Activated CD4-positive, alpha-beta T cell treated with anti-CD3 and anti-CD28 coated beads, Interleukin-2, amount 10 ng/mL, durations not matched to agents 24 days and 14 days (primary cell): ENCODE measurements at regions of chr6 and their contacts with region 1.

Region 1: GRCh38 chr6:15735567-15736265 is 72.9 kb upstream of the DTNBP1 start:
- DNase-seq: peak; percentile 53
- H3K4me3 Mint-ChIP-seq: peak overlapping the region; percentile 68
- H3K27ac Mint-ChIP-seq: peak overlapping the region; percentile 81
- H3K4me1 Mint-ChIP-seq: peaks cover 35% of the 10 kb centered on the region
- H3K27me3 Mint-ChIP-seq: no peaks in the 10 kb centered on the region

Region 2: DNA sequence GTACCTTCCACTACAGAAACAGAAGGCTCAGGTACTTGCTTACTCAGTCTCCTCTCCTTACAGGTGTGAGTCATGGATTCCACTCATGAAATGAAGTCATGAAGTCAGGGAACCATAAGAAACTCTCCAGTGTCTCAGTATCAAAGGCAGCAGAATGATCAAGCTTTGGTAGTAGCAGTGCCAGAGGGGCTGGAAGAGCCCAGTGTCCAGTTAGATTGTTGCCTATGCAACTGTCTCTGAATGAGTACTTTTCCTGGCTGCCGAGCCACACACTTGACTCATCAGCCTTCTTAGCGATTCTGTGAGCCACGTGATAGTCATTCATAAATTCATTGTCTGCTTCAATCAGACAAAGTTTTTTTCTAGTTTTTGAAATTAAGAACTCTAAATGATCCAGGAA is 20.7 kb before region 1 on chr6:
- intact Hi-C with region 1: loop called (anchors 2 kb)
- DNase-seq: no peak
- H3K4me3 Mint-ChIP-seq: no peak overlapping the region
- H3K27ac Mint-ChIP-seq: peak overlapping the region; percentile 75
- H3K4me1 Mint-ChIP-seq: peaks cover 9% of the 10 kb centered on the region
- H3K27me3 Mint-ChIP-seq: no peaks in the 10 kb centered on the region

Region 3: DNA sequence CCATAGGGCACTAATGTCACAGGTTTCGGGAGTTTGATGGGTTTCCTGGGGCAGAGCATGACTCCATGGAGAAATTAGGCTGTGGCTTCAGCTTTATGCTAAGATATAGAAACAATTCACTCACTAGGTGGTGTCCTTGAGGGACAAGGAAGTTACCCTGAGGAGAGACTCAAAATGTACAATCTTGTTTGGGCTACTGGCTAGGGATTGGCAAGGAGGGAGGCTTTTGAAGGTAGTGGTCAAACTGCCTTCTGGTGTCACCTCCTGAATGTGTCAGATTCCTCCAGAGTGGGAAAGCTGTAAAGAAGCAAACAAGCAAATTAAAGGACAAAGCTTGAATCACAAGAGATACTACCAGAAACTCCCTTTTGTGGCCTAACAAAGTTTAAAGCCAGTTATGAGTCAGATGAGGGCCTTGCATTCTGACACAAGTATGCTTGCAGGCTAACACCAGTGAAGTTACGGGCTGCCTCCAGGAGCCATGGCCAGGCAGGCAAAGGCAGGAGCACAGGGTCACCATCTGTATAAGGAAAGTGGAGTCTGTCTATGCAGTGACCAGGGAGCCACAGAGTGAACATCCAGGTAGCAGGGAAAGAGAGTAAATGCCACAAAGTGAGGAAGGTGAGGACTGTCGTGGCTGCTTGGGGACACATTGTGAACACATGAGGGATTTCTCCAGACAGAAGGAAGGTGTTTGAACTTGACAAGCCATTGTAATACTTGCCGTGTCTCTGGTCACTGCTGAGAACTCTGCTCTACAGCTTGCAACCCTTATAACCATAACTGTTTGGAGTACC is 34.8 kb after region 1 on chr6:
- intact Hi-C with region 1: loop called (anchors 1 kb)
- DNase-seq: peak; percentile 63
- H3K4me3 Mint-ChIP-seq: peak overlapping the region; percentile 47
- H3K27ac Mint-ChIP-seq: peak overlapping the region; percentile 94
- H3K4me1 Mint-ChIP-seq: peaks cover 27% of the 10 kb centered on the region
- H3K27me3 Mint-ChIP-seq: no peaks in the 10 kb centered on the region